ENCODE measurements at regions of chr17 and their contacts with region 1.

Region 1: DNA sequence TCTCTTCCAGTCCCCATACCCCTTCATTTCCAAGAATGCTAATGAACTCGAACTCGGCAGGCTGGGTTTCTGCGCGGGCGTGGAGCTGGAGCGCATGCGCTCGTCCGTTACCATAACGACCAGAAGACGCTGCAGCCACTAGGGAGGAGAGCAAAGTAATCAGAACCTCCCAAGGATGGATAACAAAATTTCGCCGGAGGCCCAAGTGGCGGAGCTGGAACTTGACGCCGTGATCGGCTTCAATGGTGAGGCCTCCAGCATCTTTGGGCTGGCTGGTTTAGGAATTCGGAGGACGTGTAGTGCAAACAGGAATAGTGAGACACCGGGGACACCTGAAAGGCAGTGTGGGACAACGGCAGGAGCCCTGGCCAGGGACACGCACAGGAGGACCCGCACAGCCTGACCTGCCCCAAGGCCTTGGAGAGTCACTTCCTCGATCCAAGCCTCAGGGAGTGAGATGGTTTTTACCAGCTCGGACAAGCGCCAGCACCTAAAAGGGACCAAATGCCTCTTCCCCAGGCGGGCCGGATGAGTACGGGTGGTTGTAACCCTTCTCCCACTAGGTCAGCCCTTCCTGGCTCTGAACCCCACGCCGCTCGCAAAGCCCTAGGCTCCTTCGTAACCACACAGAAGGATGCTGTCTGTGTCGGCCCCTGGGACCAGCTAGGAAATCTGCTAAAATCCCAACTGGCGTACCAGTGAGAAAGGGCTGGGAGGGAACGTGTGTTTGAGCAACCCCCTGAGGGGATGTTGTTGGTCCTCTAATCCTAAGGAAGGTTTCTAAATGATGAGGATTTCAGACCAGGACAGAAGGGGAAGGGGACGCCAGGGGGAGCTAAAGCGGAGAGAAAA is at the start of gene CFAP52:
- DNase-seq: peak; percentile 82
- H3K4me3 Mint-ChIP-seq: peak within 1 kb of the TSS; percentile 98
- H3K27ac Mint-ChIP-seq: peak within 1 kb of the TSS; percentile 81
- H3K4me1 Mint-ChIP-seq: peaks cover 29% of the 10 kb centered on the region
- H3K27me3 Mint-ChIP-seq: peaks cover 12% of the 10 kb centered on the region

Region 2: GRCh38 chr17:9676742-9677387 is 100.1 kb after region 1 on chr17:
- CTCF ChIA-PET with region 1: interaction called, 12 read pairs
- DNase-seq: no peak
- H3K4me3 Mint-ChIP-seq: no peak overlapping the region
- H3K27ac Mint-ChIP-seq: no peak overlapping the region
- H3K4me1 Mint-ChIP-seq: no peaks in the 10 kb centered on the region
- H3K27me3 Mint-ChIP-seq: peaks cover 3% of the 10 kb centered on the region

Region 3: GRCh38 chr17:9743096-9743495 is 166.3 kb after region 1 on chr17:
- CTCF ChIA-PET with region 1: interaction called, 11 read pairs
- DNase-seq: no peak
- H3K4me3 Mint-ChIP-seq: no peak overlapping the region
- H3K27ac Mint-ChIP-seq: no peak overlapping the region
- H3K4me1 Mint-ChIP-seq: no peaks in the 10 kb centered on the region
- H3K27me3 Mint-ChIP-seq: no peaks in the 10 kb centered on the region

Measured in activated naive CD4-positive, alpha-beta T cell treated with anti-CD3 and anti-CD28 coated beads, Interleukin-2, amount 10 ng/mL, durations not matched to agents 7 days and 5 days (primary cell).